ENCODE measurements at regions of chr3 and their contacts with region 1.

Region 1: GRCh38 chr3:84224262-84224661 is 734.5 kb upstream of the CADM2 start:
- DNase-seq: no peak

Region 2: DNA sequence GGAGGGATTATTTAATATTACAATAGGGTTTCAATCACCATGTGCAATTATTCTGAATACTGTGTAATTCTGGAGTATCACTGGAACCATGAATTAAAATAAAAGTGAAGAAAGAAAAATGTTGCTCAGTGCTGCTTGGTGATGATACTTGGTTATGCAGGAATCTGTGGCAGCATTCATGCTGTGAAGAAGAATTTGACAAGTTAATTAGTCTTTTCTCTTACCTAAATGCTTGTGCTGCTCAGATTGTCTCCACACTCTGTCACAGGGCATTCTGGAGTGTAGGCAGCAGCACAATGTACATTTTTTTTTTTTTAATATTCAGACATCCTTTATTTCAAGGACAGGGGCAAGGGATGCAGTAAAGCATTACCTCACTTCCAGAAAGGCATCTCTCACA is 14.8 kb before region 1 on chr3:
- intact Hi-C with region 1: no loop called
- DNase-seq: no peak

Region 3: GRCh38 chr3:84245789-84246188 is 21.5 kb after region 1 on chr3:
- intact Hi-C with region 1: no loop called
- DNase-seq: no peak

Region 4: DNA sequence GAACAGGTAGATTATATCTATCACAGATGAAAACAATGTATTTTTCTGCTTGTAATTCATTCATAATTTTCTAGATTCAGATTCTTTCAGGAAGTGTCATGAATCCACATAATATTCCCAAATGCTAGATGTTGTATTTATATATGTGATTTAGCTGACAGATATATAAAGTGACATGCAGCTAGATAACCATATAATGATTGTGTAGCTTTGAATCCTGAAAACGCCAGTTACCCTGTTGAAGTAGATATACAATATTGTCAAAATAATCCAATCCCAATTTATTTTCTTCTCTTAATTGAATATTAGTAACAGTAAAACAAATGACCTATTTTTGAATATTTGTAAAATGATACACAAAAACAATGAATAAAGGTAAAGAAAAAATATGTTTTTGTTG is 1472.9 kb after region 1 on chr3:
- intact Hi-C with region 1: loop called in 1 of 2 experiments (anchors 5 kb)
- DNase-seq: no peak